HEK293 (cell line): ENCODE measurements at regions of chr15 and their contacts with region 1.

Region 1: DNA sequence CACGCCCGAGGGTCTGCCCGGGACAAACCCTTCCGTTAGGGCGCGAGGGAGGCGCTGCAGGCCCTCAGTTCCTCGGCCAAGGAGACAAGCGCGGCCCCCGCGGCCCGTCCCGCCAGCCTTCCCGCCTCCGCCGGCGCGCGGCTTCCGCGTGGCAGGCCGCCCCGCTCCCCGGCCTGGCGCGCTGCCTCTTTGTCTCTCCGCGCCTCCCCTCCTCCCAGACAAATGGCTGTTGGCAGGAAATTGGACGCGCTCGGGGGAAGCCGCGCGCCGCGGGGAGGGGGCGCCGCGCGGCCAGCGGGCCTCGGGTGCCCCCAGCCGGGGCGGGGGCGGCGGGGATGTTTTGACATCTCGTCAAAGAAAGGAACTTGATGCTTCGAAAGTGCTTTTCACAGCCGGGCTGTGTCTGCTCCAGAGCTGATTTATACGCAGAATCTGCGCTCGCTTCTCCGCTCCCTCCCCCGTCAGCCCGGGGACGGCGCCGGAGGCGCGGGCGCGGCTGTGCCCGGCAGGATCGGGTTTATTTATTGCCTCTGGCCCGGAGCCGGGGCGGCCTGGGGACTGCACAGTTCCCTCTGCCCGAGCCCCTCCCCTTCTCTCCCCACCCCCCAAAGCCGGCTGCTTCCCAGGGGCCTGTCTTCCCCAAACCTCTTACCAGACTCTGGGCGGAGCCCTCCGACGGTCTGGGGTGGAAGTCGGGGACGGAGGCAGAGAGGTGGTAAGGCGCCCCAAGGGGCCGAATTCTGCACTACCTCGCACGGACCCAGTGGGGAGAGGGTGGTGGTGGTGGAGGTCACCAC is 20.7 kb downstream of the SHF start:
- H3K4me3 ChIP-seq: peak overlapping the region; percentile 42
- H3K27ac ChIP-seq: peak overlapping the region; percentile 95
- H3K4me1 ChIP-seq: 0 out of 2 replicates have a peak, but pooled peaks cover 2% of the 10 kb centered on the region
- CTCF ChIP-seq: peak; percentile 66

Region 2: DNA sequence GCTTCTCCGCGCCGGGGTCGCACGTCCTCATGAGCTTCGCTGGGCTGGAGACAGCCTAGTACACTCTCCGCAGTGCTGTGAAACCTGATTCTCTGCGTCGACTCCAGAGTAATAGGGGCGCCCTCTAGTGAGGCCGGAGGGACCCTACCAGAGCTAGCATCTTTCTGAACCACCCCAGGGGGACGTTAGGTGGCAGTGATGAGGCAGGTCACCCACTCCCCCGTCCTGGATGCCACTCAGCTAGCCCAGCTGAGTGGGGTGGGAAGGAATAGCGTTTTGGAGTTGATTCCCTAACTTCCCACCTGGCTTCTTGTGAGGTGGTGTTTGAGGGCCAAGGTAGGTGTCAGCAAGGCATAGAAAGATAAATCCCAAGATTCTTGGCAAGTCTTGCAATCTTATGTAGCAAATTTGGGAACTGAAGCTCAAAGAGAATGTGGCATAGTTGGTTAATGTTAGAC is 48.9 kb before region 1 on chr15:
- CTCF ChIA-PET with region 1: interaction called, 11 read pairs
- POLR2A ChIA-PET with region 1: no interaction called
- H3K4me3 ChIP-seq: no peak overlapping the region
- H3K27ac ChIP-seq: no peak overlapping the region
- H3K4me1 ChIP-seq: no peaks in the 10 kb centered on the region
- CTCF ChIP-seq: peak; percentile 96

Region 3: DNA sequence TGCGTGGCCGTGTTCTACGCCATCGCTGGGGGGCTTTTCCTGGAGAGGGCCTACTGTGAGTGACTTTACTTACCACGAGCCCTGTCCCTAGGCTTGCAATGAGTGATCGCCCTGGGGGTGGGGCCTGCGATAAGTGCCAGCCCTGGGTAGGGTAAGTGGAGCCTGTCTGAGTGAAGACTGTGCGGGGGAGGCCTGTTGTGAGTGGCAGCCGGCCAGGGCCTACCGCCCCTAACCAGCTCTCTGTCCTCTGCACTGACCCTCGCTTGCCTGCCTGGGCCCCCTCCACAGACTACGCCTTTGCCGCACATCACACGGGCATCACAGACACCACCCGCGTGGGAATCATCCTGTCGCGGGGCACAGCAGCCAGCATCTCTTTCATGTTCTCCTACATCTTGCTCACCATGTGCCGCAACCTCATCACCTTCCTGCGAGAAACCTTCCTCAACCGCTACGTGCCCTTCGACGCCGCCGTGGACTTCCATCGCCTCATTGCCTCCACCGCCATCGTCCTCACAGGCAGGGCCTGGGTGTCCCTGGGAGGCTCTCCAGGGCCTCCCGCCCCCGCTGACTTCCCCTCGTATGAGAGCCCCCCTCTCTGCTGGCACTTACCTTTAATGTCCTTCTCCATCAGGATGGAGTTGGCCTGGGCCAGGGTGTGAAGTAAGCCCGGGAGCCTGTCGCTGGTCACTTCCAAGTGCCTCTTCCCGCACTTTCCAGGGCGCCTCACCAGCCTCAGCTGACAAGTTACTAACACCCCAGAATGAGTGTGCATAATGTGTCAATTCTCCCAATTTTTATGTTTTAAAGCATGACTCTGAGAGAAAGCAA is 14.8 kb before region 1 on chr15:
- CTCF ChIA-PET with region 1: no interaction called
- POLR2A ChIA-PET with region 1: no interaction called
- H3K4me3 ChIP-seq: no peak overlapping the region
- H3K27ac ChIP-seq: no peak overlapping the region
- H3K4me1 ChIP-seq: no peaks in the 10 kb centered on the region
- CTCF ChIP-seq: no peak

Region 4: DNA sequence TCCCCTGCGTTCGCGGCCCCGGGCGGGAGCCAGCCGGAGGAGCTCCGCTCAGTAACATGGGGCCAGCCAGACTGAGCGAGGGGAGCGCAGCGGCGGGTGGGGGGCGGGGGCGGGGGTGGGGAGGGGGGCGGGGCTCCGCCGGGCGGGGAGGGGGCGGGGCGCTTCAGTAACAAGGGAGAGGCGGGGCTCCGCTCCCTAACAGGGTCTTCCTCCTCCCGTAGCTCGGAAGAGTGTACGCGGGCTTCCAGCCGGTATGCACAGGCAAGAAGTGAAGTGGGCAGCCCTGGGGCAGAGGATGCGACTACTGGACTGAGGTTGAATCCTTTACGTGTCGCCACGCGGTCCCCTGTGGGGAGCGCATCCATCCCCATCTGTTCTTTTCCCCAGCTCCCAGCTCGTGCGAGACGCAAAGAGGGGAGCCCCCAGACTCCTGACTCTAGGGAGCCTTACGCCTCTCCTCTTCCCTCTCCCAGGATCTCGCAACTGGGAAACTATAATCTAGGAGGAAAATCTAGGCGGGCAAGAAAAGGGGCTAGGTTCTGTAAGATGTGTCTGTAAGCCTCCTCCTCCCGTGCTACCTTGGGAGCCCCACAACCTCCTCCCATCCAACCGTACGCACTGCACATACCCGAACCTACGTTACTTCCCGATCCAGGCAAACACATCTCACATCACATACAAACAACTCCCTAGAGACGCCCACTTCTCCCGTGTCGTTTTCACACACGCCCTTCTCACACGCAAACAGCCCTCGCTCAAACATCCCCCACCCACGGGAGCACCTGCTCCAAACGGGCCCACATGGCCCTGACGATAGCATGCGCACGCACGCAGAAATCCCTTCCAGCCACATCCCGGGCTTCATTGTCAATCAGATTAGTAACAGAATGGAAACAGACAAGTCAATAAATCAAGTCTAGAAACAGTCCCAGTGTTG is 21.1 kb after region 1 on chr15 and contains the start of gene SHF:
- CTCF ChIA-PET with region 1: interaction called, 9 read pairs
- POLR2A ChIA-PET with region 1: interaction called, 13 read pairs
- H3K4me3 ChIP-seq: peak within 1 kb of the TSS; percentile 41
- H3K27ac ChIP-seq: no peak within 1 kb of the TSS
- H3K4me1 ChIP-seq: no peaks in the 10 kb centered on the region; the same call in 1 of the 2 replicates
- CTCF ChIP-seq: no peak

Region 5: DNA sequence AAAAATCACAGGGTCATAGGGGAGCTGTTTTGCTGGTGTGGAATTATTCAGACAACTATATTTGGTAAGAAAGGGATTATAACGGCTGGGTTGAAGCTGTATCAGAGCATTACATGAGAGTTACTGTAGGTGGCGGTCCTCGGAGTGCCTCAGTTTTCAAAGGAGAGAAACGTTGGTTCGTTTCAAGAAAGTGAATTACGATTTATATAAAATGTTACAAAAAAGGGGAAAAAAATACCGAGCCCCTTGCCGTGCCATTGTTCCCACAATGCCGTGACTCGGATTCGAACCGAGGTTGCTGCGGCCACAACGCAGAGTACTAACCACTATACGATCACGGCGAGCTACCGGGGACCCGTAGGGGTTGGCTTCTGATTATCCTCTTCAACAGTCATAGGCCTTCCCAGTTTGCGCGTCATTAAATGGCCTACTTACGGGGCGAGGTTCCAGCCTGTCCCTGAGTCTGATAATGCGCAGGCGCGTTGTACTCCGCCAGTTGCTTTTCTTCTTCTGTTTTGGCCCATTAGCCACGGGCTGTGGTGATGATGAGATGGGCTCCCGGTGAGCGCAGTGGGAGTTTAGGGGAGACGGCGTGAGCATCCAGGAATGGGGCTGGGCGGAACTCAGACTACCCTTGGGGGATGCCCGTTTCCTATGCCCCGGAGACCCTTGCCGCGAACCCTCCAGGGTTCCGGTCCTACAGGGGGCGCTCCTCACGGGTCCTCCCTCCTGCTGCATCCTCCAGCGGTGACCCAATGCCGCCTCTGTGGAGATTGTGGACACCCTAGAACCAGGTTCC is 31.5 kb after region 1 on chr15:
- CTCF ChIA-PET with region 1: interaction called, 60 read pairs
- POLR2A ChIA-PET with region 1: interaction called, 8 read pairs
- H3K4me3 ChIP-seq: peak overlapping the region; percentile 90
- H3K27ac ChIP-seq: peak overlapping the region; percentile 28; the same call in 1 of the 2 replicates
- H3K4me1 ChIP-seq: no peaks in the 10 kb centered on the region
- CTCF ChIP-seq: peak; percentile 92